Activated CD4-positive, alpha-beta T cell treated with anti-CD3 and anti-CD28 coated beads for 36 hours (primary cell): ENCODE measurements at regions of chr7 and their contacts with region 1.

Region 1: GRCh38 chr7:23474094-23474828 is 4.0 kb upstream of the IGF2BP3 start:
- DNase-seq: peak; percentile 94
- ATAC-seq: peak; percentile 91
- H3K4me3 Mint-ChIP-seq: peak overlapping the region; percentile 63
- H3K27ac Mint-ChIP-seq: peak overlapping the region; percentile 38
- H3K4me1 Mint-ChIP-seq: peaks cover 26% of the 10 kb centered on the region
- H3K27me3 Mint-ChIP-seq: peaks cover 57% of the 10 kb centered on the region

Region 2: DNA sequence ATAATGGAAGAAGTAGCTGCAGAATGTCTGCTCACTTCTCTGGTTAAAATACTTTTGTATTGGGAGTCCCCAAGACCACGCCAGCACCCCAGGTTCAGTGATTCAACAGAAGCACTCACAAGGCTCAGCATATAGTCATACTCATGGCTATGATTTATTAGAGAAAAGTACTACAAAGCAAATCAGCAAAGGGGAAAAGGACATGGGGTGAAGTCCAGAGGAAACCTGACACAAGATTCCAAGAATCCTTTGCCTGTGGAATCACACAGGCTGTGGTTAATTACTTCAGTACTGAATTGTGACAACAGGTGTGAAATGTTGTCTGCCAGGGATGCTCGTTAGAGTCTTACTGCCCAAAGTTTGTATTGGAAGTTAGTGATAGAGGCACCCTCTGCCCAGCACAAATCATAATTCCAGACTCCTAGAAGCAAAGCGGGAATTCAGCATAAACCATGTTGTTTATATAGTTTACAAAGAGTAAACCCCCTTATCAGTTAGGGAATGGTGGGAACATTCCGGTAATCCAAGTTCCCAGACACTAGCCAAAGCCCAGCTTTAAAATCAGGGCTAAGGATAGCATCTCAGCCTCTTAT is 539.7 kb before region 1 on chr7:
- CTCF ChIA-PET with region 1: no interaction called
- POLR2A ChIA-PET with region 1: no interaction called
- intact Hi-C with region 1: no loop called
- DNase-seq: no peak
- ATAC-seq: no peak
- H3K4me3 Mint-ChIP-seq: no peak overlapping the region
- H3K27ac Mint-ChIP-seq: no peak overlapping the region
- H3K4me1 Mint-ChIP-seq: no peaks in the 10 kb centered on the region
- H3K27me3 Mint-ChIP-seq: peaks cover 6% of the 10 kb centered on the region

Region 3: GRCh38 chr7:23181684-23182553 is 292.3 kb before region 1 on chr7 and contains the start of gene NUP42:
- CTCF ChIA-PET with region 1: no interaction called
- POLR2A ChIA-PET with region 1: no interaction called
- intact Hi-C with region 1: loop called in 1 of 2 experiments (anchors 5 kb)
- DNase-seq: peak; percentile 98
- ATAC-seq: peak; percentile 98
- H3K4me3 Mint-ChIP-seq: peak within 1 kb of the TSS; percentile 88
- H3K27ac Mint-ChIP-seq: peak within 1 kb of the TSS; percentile 97
- H3K4me1 Mint-ChIP-seq: peaks cover 30% of the 10 kb centered on the region
- H3K27me3 Mint-ChIP-seq: no peaks in the 10 kb centered on the region
- total RNA-seq, gene NUP42: 32.3 to 44.8 TPM

Region 4: GRCh38 chr7:23357190-23358093 is 116.8 kb before region 1 on chr7:
- CTCF ChIA-PET with region 1: interaction called, 6 read pairs
- POLR2A ChIA-PET with region 1: no interaction called
- intact Hi-C with region 1: loop called (anchors 2 kb)
- DNase-seq: no peak
- ATAC-seq: peak; percentile 42
- H3K4me3 Mint-ChIP-seq: no peak overlapping the region
- H3K27ac Mint-ChIP-seq: no peak overlapping the region
- H3K4me1 Mint-ChIP-seq: peaks cover 18% of the 10 kb centered on the region
- H3K27me3 Mint-ChIP-seq: peaks cover 7% of the 10 kb centered on the region

Region 5: DNA sequence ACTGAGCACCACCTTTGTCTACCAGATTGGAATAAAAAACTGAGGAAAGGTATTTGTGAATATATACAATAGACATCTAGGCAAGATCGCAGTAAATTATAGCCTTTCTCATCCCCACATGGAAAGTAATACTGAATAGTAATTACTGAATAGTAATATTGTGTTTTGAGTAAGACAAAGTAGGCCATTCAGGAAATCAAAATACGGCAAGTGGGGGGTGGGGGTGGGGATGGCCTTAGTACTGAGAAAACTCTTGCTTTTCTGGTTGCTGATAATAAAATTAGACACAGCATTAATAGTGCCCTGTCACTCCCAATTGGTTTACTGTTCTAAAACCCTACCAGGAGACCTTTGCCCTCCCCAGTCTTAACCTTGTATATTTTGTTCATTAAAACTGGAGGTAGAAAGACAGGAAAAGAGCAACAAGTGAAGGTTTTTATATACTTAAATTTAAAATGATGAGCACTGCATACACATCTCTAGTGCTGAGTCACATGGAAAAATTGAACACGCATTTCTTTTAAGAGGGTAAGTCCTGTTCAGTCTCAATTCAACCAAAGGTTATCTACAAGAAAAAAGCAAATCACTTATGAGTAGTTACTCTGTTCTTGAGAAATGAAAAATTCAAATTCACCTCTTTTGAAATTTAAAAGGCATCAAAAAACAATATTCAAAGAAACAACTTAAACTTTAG is 69.6 kb before region 1 on chr7:
- CTCF ChIA-PET with region 1: no interaction called
- POLR2A ChIA-PET with region 1: no interaction called
- intact Hi-C with region 1: loop called in 1 of 2 experiments (anchors 2 kb)
- DNase-seq: peak; percentile 46
- ATAC-seq: peak; percentile 90
- H3K4me3 Mint-ChIP-seq: no peak overlapping the region
- H3K27ac Mint-ChIP-seq: peak overlapping the region; percentile 85
- H3K4me1 Mint-ChIP-seq: peaks cover 28% of the 10 kb centered on the region
- H3K27me3 Mint-ChIP-seq: no peaks in the 10 kb centered on the region

Region 6: DNA sequence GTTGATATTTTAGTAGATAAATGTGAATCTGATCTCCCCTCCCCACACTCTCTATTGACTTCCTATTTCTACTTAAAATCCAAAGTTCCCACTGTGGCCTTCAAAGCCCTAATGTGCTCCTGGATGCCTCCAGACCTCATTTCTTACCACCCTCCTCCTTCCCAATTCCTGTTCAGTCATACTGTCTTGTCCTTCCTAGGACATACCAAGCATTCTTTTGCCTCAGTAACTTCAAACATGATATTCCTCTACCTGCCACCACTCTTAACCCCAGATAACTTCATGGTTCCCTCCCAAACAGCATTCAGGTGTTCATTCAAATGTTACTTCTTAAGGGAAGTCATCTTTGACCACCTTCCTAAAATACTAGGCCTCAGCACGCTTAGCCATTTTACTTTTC is 171.6 kb after region 1 on chr7:
- CTCF ChIA-PET with region 1: no interaction called
- POLR2A ChIA-PET with region 1: no interaction called
- intact Hi-C with region 1: no loop called
- DNase-seq: no peak
- ATAC-seq: no peak
- H3K4me3 Mint-ChIP-seq: no peak overlapping the region
- H3K27ac Mint-ChIP-seq: no peak overlapping the region
- H3K4me1 Mint-ChIP-seq: no peaks in the 10 kb centered on the region
- H3K27me3 Mint-ChIP-seq: no peaks in the 10 kb centered on the region

Region 7: DNA sequence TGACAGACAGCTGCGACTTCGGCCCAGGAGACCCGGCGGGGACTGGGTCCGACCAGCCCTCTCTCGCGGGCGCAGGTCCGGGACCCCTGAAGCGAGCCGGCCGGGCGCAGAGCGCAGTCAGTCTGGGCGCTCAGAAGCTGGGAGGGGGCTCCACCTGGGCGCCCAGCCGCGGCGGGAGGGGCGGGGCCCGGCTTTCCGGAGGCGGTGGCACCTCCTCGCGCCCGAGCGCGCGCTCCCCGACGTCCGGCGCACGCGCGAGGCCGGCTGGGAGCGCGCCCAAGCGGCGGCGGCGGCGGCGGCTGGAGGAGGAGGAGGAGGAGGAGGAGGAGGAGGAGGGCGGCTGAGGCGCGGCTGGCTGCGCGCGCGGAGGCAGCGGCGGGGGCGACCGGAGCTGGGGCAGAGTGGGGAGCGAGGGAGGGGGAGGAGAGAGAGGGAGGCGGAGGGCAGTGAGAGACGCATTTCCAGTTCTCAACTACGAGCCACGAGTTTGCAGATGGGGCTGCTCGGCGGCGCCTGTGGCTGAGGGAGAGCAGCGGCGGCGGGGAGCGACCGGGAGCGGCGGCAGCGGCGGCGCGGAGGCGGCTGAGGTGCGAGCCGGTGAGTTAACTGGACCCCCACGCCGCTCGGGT is 1098.8 kb after region 1 on chr7 and contains the start of gene PALS2:
- CTCF ChIA-PET with region 1: interaction called, 3 read pairs
- POLR2A ChIA-PET with region 1: no interaction called
- intact Hi-C with region 1: loop called in 1 of 2 experiments (anchors 5 kb)
- DNase-seq: peak; percentile 86
- ATAC-seq: peak; percentile 68
- H3K4me3 Mint-ChIP-seq: peak within 1 kb of the TSS; percentile 88
- H3K27ac Mint-ChIP-seq: peak within 1 kb of the TSS; percentile 86
- H3K4me1 Mint-ChIP-seq: peaks cover 34% of the 10 kb centered on the region
- H3K27me3 Mint-ChIP-seq: peaks cover 12% of the 10 kb centered on the region
- total RNA-seq, gene PALS2: 20.8 to 41.7 TPM